Left ventricle myocardium inferior (tissue), 1 donor: ENCODE measurements at regions of chr19 and their contacts with region 1.

Region 1: DNA sequence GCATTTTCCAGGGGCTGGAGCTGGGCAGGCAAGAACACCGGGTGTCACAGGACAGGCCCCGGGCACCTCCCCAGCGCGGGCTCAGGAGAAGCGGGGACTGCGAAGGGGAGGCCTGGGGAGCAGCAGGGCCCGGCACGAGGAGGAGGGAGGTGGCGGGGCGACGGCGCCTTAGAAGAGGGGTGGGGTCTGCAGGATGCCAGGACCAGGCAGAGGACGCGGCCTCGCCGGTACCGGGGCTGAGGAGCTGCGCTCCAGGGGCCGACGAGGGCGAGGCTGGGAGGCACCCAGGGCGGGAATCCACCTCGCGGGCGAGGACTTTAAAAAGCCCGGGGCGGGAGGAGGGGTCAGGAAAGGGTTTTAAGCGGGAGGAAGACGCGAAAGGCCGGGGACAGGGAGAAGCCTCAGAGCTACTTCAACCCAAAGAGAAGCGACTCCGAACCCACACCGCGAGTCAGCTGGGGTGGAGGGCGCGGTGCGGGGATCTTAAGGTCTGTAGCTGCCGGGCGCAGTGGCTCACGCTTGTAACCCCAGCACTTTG is 665 bp downstream of the ZNF347 start:
- DNase-seq: peak; percentile 32
- H3K4me3 ChIP-seq: peak overlapping the region; percentile 86
- H3K27ac ChIP-seq: peak overlapping the region; percentile 86
- H3K4me1 ChIP-seq: peaks cover 20% of the 10 kb centered on the region
- H3K27me3 ChIP-seq: no peaks in the 10 kb centered on the region
- CTCF ChIP-seq: no peak

Region 2: DNA sequence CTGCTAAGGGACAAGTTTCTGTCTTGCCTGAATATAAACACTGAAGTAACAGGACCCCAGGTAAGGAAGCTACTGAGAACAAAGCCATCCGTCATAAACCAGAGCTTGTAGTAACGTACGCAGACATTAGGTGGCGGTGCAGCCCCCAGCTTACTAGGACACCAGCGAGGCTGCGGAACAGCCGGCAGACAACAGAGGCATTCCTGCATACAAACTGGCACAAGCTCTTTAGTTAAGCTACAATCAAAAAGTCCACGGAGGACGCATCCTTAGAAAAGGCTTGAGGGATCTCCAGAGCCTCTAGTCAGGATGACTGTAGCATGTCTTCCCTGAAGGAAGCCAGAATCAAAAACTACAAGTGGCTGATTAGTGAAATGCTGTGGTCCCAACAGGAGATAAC is 81.2 kb before region 1 on chr19:
- intact Hi-C with region 1: loop called (anchors 10 kb)
- DNase-seq: peak; percentile 63
- H3K4me3 ChIP-seq: no peak overlapping the region
- H3K27ac ChIP-seq: peak overlapping the region; percentile 82
- H3K4me1 ChIP-seq: peaks cover 24% of the 10 kb centered on the region
- H3K27me3 ChIP-seq: no peaks in the 10 kb centered on the region
- CTCF ChIP-seq: peak; percentile 84